Activated CD8-positive, alpha-beta T cell treated with anti-CD3 and anti-CD28 coated beads, Interleukin-2, amount 10 ng/mL, durations not matched to agents 7 days and 5 days (primary cell): ENCODE measurements at regions of chr3 and their contacts with region 1.

Region 1: DNA sequence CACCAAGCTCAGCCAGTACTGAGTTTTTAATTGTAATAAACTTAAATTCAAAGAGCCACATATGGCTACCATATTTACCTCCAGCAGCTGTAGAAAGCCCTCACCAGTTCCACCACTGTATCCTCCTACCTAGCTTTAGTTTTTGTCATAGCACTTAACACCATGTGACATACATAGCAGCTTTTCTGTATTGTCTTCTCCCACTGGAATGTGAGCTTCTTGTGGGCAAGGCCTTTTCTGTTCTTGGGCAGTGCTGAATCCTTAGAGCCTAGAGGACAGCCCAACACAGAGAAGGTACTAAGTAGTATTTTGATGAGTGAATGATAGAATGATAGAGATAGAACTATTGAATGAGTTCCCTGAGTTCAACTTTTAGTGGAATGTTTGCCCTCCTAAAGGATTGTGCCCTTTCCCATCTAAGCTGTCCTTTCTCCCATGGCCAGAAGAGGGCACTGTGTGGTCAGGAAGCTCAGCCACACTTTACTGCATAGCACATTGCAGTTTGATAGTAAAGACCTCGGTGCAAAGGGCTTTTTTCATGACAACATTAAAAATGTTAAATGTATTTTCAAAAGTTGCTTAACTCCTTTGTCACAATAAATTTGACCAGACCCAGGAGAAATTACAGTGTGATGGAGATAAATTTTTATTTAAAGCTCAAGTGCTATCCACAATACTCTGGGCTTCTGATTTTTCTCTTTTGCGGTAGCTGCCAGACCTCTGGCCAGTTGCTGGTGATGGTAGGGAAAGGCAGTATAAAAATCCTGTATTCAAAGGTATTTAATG is 115.8 kb downstream of the GHSR start:
- DNase-seq: peak; percentile 68
- ATAC-seq: peak; percentile 90
- H3K4me3 Mint-ChIP-seq: no peak overlapping the region
- H3K27ac Mint-ChIP-seq: no peak overlapping the region
- H3K4me1 Mint-ChIP-seq: peaks cover 5% of the 10 kb centered on the region
- H3K27me3 Mint-ChIP-seq: no peaks in the 10 kb centered on the region

Region 2: GRCh38 chr3:172034786-172035685 is 297.4 kb before region 1 on chr3:
- CTCF ChIA-PET with region 1: interaction called, 12 read pairs
- POLR2A ChIA-PET with region 1: no interaction called
- DNase-seq: peak; percentile 38
- ATAC-seq: no peak
- H3K4me3 Mint-ChIP-seq: no peak overlapping the region
- H3K27ac Mint-ChIP-seq: no peak overlapping the region
- H3K4me1 Mint-ChIP-seq: peaks cover 5% of the 10 kb centered on the region
- H3K27me3 Mint-ChIP-seq: peaks cover 5% of the 10 kb centered on the region

Region 3: DNA sequence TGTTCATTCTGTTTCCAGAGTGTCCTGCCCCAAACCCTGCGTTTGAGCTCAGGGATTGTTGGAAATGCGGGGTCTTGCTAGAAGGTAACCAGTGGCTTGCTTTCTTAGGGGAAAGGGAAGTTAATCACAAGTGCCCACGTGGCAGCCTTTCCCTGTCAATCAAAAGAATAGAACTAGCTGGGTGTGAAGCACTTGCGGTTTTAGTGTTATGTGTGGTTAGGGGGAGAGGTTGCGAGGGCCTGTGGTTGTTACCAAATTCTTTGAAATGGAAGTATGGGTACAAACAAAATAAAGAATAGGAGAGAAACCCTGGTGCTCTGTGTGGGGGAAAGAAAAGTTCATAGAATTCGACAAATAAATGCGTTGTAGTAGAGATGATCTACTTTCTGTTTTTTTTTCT is 225.5 kb before region 1 on chr3:
- CTCF ChIA-PET with region 1: interaction called, 11 read pairs
- POLR2A ChIA-PET with region 1: no interaction called
- DNase-seq: peak; percentile 87
- ATAC-seq: peak; percentile 66
- H3K4me3 Mint-ChIP-seq: peak overlapping the region; percentile 75
- H3K27ac Mint-ChIP-seq: peak overlapping the region; percentile 85
- H3K4me1 Mint-ChIP-seq: peaks cover 70% of the 10 kb centered on the region
- H3K27me3 Mint-ChIP-seq: peaks cover 2% of the 10 kb centered on the region

Region 4: GRCh38 chr3:172171396-172172075 is 160.9 kb before region 1 on chr3:
- CTCF ChIA-PET with region 1: no interaction called
- POLR2A ChIA-PET with region 1: no interaction called
- DNase-seq: no peak
- ATAC-seq: no peak
- H3K4me3 Mint-ChIP-seq: no peak overlapping the region
- H3K27ac Mint-ChIP-seq: no peak overlapping the region
- H3K4me1 Mint-ChIP-seq: peaks cover 5% of the 10 kb centered on the region
- H3K27me3 Mint-ChIP-seq: no peaks in the 10 kb centered on the region

Region 5: DNA sequence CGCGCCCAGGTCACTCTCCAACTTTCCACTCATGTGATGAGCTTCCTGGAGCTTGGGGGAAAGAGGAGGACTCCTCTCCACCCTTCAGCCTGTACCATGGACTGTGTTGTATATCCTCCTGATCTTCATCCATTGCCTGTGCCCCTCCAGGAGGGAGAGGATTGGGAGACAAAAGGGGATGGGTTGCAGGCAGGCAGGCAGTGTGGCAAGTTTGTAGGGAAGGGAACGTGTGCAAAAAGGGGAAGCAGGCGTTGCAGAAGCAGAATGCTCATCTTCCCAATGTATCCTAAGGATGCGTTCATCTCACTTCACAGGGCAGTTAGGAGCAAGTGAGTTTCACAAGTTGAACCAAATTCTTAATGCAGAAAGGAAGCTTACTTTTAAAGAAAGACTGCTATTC is 143.9 kb after region 1 on chr3:
- CTCF ChIA-PET with region 1: interaction called, 16 read pairs
- POLR2A ChIA-PET with region 1: no interaction called
- DNase-seq: no peak
- ATAC-seq: no peak
- H3K4me3 Mint-ChIP-seq: no peak overlapping the region
- H3K27ac Mint-ChIP-seq: no peak overlapping the region
- H3K4me1 Mint-ChIP-seq: peaks cover 18% of the 10 kb centered on the region
- H3K27me3 Mint-ChIP-seq: peaks cover 4% of the 10 kb centered on the region

Region 6: DNA sequence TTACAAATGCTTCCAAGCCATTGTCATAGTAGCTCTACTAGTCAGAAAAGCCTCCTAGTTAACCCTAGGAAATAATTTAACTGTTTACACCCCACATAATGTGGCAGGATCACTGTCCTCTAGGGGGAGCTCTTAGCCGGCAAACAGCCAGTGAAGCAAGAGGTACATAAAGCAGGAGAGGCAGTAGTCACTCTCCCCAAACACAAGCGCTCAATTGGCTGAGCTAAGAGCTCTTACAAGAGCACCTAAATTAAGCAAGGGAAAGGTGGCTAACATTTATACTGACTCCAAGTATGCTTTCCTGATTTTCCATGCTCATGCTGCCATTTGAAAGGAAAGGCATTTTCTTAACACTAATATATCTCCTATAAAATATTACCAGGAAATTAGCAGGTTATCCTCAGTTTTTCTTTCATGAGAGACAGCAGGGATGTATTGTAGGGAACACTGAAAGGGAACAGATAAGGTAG is 340.8 kb after region 1 on chr3:
- CTCF ChIA-PET with region 1: interaction called, 70 read pairs
- POLR2A ChIA-PET with region 1: no interaction called
- DNase-seq: peak; percentile 82
- ATAC-seq: peak; percentile 81
- H3K4me3 Mint-ChIP-seq: no peak overlapping the region
- H3K27ac Mint-ChIP-seq: no peak overlapping the region
- H3K4me1 Mint-ChIP-seq: peaks cover 16% of the 10 kb centered on the region
- H3K27me3 Mint-ChIP-seq: no peaks in the 10 kb centered on the region